BJ (cell line): ENCODE measurements at regions of chr7 and their contacts with region 1.

Region 1: GRCh38 chr7:24707988-24708615 is 49.2 kb downstream of the GSDME start:
- DNase-seq: no peak
- H3K4me3 ChIP-seq: no peak overlapping the region
- H3K27me3 ChIP-seq: no peaks in the 10 kb centered on the region
- CTCF ChIP-seq: no peak

Region 2: DNA sequence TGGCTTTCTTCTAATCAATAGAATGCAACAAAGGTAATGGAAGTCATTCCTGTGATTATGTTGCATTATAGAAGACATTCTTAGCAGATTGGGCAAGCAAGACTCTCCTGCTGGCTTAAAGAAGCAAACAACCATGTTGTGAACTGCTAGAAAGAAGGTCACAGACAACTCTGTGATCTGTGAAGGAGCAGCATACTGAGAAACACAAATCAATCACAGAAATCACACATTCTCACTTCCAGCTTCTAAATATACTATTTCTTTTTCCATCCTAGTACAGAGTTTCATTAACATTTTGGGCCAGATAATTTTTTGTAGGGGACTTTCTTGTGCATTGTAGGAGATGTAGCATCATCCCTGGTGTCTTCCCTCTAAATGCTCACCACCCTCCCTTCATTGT is 162.9 kb before region 1 on chr7:
- CTCF ChIA-PET with region 1: no interaction called
- POLR2A ChIA-PET with region 1: no interaction called
- DNase-seq: no peak
- H3K4me3 ChIP-seq: no peak overlapping the region
- H3K27me3 ChIP-seq: no peaks in the 10 kb centered on the region
- CTCF ChIP-seq: no peak

Region 3: DNA sequence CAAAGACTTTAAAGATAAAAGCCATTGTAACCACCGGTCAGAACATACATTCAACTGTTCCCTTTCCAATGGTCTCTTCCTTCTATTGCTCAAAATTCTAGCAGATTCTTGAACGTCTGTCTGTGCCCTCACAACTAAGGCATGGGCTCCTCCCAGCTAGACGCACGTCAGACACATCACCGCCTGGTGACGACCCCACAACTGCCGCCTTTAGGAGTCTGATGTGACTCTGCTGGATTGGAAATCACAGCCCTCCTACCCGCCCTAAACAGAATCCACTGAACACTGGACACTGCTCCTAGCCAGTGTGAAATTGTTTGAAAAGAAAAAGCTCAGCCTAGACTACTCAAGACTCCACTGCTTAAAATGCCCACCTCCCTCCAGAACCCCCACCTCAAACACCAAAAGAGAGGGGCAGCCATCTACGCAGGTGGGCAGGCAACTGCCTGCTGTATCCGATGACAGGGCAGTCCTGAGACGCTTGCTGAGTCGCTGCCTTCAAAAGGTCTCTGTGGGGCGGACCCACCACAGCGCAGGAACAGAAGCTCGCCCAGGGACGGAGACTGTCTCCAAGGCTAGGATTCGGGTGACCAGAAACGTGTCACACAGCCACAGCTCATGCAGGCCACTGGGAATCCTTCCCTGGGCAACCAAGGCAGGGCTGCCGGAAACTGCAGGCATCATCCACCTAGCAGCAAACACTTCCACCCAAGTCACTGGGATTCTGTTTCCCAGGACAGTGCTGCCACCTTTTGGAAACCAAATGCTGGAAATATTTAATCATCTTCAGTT is 14.5 kb after region 1 on chr7:
- CTCF ChIA-PET with region 1: interaction called, 11 read pairs
- POLR2A ChIA-PET with region 1: no interaction called
- DNase-seq: no peak
- H3K4me3 ChIP-seq: no peak overlapping the region
- H3K27me3 ChIP-seq: no peaks in the 10 kb centered on the region
- CTCF ChIP-seq: peak; percentile 47